ENCODE measurements at regions of chr1 and their contacts with region 1.

Region 1: GRCh38 chr1:64877151-64877550 is 89.2 kb downstream of the JAK1 start:
- DNase-seq: peak in 1 of 2 donors; percentile 89
- ATAC-seq: peak; percentile 53 to 77 (median 75)
- H3K4me3 ChIP-seq: no peak overlapping the region
- H3K4me3 Mint-ChIP-seq: peak overlapping the region; percentile 85
- H3K27ac ChIP-seq: peak overlapping the region; percentile 32
- H3K27ac Mint-ChIP-seq: peak overlapping the region; percentile 79 to 93
- H3K4me1 ChIP-seq: peaks cover 65% of the 10 kb centered on the region
- H3K4me1 Mint-ChIP-seq: peaks cover 89 to 97% of the 10 kb centered on the region in 2 donors
- H3K27me3 ChIP-seq: no peaks in the 10 kb centered on the region
- H3K27me3 Mint-ChIP-seq: no peaks in the 10 kb centered on the region
- CTCF ChIP-seq: no peak

Region 2: GRCh38 chr1:64891448-64891825 is 14.3 kb after region 1 on chr1:
- intact Hi-C with region 1: loop called (anchors 1 kb)
- DNase-seq: peak; percentile 44 to 46
- ATAC-seq: peak; percentile 54 to 72 (median 64)
- H3K4me3 ChIP-seq: peak overlapping the region; percentile 9
- H3K4me3 Mint-ChIP-seq: peak overlapping the region; percentile 83
- H3K27ac ChIP-seq: peak overlapping the region; percentile 55
- H3K27ac Mint-ChIP-seq: peak overlapping the region; percentile 86 to 93
- H3K4me1 ChIP-seq: peaks cover 69% of the 10 kb centered on the region
- H3K4me1 Mint-ChIP-seq: peaks cover 97% of the 10 kb centered on the region in 2 donors
- H3K27me3 ChIP-seq: no peaks in the 10 kb centered on the region
- H3K27me3 Mint-ChIP-seq: no peaks in the 10 kb centered on the region
- CTCF ChIP-seq: no peak

Region 3: GRCh38 chr1:65036545-65037180 is 159.5 kb after region 1 on chr1:
- intact Hi-C with region 1: no loop called
- DNase-seq: no peak
- ATAC-seq: no peak
- H3K4me3 ChIP-seq: no peak overlapping the region
- H3K4me3 Mint-ChIP-seq: no peak overlapping the region
- H3K27ac ChIP-seq: no peak overlapping the region
- H3K27ac Mint-ChIP-seq: no peak overlapping the region
- H3K4me1 ChIP-seq: peaks cover 6% of the 10 kb centered on the region
- H3K4me1 Mint-ChIP-seq: peaks cover 8 to 14% of the 10 kb centered on the region in 2 donors
- H3K27me3 ChIP-seq: no peaks in the 10 kb centered on the region
- H3K27me3 Mint-ChIP-seq: no peaks in the 10 kb centered on the region
- CTCF ChIP-seq: no peak